PC-9 (cell line): ENCODE measurements at regions of chr9 and their contacts with region 1.

Region 1: DNA sequence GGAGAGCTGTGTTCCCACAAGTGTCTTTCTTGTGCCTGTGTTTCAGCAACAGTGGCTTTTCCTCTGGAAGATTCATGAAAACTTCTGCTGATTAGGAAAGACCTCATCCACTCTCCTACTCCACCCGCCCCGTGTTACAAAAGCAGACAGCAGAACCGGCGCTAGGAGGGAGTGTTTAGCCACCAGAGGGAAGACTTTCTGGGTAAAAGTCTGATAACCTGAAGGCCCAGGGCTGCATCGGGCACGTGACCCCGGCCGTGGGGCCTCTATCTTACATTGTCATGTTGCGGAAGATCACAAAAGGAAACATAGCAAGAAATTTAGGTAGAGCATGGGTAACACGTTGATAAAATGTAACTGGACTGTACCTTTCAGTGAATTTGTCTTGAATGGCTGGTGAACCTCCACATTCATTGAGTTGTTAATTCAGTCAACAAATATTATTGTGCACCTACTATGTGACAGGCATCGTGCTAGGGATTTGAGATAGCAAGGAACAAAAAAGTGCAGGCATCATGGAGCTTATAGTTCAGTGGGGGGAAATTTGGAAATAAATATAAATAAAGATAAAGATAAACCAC is 31.9 kb upstream of the DMRT2 start:
- DNase-seq: no peak
- H3K4me3 ChIP-seq: no peak overlapping the region
- H3K27ac ChIP-seq: no peak overlapping the region
- H3K4me1 ChIP-seq: no peaks in the 10 kb centered on the region
- H3K27me3 ChIP-seq: peaks cover 12% of the 10 kb centered on the region; the same call in 1 of the 2 replicates
- CTCF ChIP-seq: peak; percentile 30; the same call in 1 of the 2 replicates

Region 2: GRCh38 chr9:1604942-1605560 is 586.8 kb after region 1 on chr9:
- CTCF ChIA-PET with region 1: no interaction called
- POLR2A ChIA-PET with region 1: no interaction called
- intact Hi-C with region 1: loop called (anchors 10 kb)
- DNase-seq: no peak
- H3K4me3 ChIP-seq: no peak overlapping the region
- H3K27ac ChIP-seq: no peak overlapping the region
- H3K4me1 ChIP-seq: no peaks in the 10 kb centered on the region
- H3K27me3 ChIP-seq: no peaks in the 10 kb centered on the region
- CTCF ChIP-seq: peak; percentile 54